ENCODE measurements at regions of chr6 and their contacts with region 1.

Region 1: DNA sequence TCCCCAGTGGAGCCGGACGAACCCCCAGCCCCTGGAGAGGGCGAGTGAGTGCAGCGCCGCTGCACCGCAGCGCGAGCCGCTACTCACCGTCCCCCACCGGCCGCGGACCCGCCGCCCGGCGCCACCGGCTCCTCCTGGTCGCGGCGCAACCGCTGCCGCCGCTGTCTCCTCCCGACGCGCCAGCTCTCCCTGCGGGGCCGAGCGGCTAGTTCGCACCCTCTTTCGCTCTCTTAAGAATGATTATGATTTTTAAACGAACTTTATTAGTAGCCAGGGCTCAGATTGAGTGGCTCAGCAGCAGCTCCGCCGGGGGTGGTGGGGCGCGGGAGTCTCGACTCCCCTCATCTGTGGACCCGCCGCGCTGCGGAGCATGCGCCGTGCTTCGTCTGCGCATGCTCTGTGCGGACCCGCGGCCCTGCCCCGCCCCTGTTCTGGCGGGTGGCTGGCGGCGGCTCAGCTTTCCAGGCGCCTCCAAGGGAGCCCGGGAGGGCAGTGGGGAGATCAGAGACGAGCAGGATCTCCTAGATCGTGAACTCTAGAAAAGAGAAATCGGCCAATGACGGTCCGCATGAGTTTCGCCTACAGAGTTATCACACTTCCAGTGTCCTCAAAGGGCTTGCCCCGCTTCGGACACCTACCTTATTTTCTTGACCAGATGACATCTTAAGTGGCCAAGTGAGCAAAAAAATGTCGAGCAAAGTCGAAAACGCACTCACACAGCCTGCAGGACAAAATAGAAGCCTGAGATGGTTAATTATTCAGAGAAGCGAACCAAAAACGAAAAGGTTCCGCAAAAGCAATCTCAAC is at the start of gene RAB23:
- DNase-seq: peak; percentile 80 to 82
- H3K4me3 ChIP-seq: peak within 1 kb of the TSS; percentile 29 to 89 (median 87)
- H3K27ac ChIP-seq: peak within 1 kb of the TSS; percentile 61 to 97 (median 94)
- H3K4me1 ChIP-seq: peaks cover 4 to 7% of the 10 kb centered on the region in 2 donors
- H3K27me3 ChIP-seq: no peaks in the 10 kb centered on the region
- CTCF ChIP-seq: peak in 2 of 6 experiments; percentile 5 to 13
- POLR2A ChIP-seq: peak; percentile 73 to 95
- total RNA-seq, gene RAB23: 19.6 to 38.9 (median 27.9) TPM

Region 2: DNA sequence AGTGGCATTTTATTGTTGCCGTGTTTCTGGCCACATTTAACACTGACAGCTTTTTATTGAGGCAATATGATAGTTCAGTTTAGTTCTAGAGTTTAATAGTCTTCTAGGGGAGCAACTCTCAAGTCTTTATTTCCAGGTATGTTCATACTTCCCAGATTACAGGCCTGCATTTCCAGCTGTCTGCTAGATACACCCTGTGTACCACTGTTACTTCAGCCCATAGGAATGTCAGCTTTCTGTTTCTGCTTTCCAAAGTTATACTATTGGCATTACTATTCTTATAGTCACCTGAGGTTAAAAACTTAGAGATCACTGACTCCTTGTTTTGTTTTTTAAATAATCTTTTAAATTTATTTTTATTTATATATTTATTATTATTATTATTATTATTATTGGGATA is 124.5 kb before region 1 on chr6:
- intact Hi-C with region 1: no loop called
- DNase-seq: no peak
- H3K4me3 ChIP-seq: no peak overlapping the region
- H3K27ac ChIP-seq: no peak overlapping the region
- H3K4me1 ChIP-seq: peaks cover 0 to 5% of the 10 kb centered on the region in 2 donors
- H3K27me3 ChIP-seq: no peaks in the 10 kb centered on the region
- CTCF ChIP-seq: no peak
- POLR2A ChIP-seq: no peak

Region 3: GRCh38 chr6:57108691-57109090 is 113.4 kb before region 1 on chr6:
- intact Hi-C with region 1: no loop called
- DNase-seq: no peak
- H3K4me3 ChIP-seq: no peak overlapping the region
- H3K27ac ChIP-seq: no peak overlapping the region
- H3K4me1 ChIP-seq: no peaks in the 10 kb centered on the region
- H3K27me3 ChIP-seq: no peaks in the 10 kb centered on the region
- CTCF ChIP-seq: no peak
- POLR2A ChIP-seq: no peak

Region 4: GRCh38 chr6:57172136-57173055 is 49.7 kb before region 1 on chr6 and contains the start of gene BAG2:
- intact Hi-C with region 1: loop called (anchors 5 kb)
- DNase-seq: peak; percentile 94 to 95
- H3K4me3 ChIP-seq: peak within 1 kb of the TSS; percentile 33 to 65 (median 39)
- H3K27ac ChIP-seq: peak within 1 kb of the TSS; percentile 69 to 95 (median 93)
- H3K4me1 ChIP-seq: peaks cover 12 to 16% of the 10 kb centered on the region in 2 donors
- H3K27me3 ChIP-seq: no peaks in the 10 kb centered on the region
- CTCF ChIP-seq: peak in 4 of 6 experiments; percentile 38 to 53 (median 46)
- POLR2A ChIP-seq: peak; percentile 55 to 90
- total RNA-seq, gene BAG2: 9.5 to 11.5 (median 10.9) TPM